ENCODE measurements at regions of chr7 and their contacts with region 1.

Region 1: GRCh38 chr7:71639382-71640085 is 507.6 kb downstream of the GALNT17 start:
- DNase-seq: no peak
- H3K4me3 ChIP-seq: no peak overlapping the region
- H3K27ac ChIP-seq: no peak overlapping the region
- H3K4me1 ChIP-seq: no peaks in the 10 kb centered on the region
- H3K27me3 ChIP-seq: no peaks in the 10 kb centered on the region
- CTCF ChIP-seq: no peak
- POLR2A ChIP-seq: no peak

Region 2: DNA sequence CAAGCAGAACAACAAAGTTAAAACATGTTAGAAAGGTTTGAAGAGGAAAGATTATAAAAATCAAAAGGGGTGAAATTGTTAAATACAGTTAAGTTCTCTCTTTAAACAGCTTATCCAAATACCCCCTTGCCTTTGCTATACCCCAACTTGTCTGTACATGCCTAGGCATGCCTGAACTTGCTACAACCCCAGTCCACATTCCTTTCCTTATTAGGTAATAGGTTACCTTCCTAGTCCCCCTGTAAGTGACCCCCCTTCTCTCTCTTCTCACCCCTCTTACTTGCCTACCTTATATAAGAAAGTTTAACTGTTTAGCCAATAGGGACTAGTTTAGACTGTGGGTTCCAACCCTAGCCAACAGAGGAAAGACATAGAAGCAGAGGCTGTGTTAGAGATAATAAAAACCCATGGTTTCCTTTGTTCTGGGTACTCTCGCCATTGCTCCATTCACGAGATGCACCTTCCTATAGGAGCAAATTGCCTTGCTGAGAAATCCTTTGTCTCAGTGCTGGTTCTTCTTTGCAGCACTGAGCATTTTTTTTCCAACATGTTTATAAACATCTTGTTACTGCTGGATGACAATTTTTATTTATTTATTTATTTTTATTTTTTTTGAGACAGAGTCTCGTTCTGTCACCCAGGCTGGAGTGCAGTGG is 789.8 kb before region 1 on chr7:
- intact Hi-C with region 1: no loop called
- DNase-seq: no peak
- H3K4me3 ChIP-seq: no peak overlapping the region
- H3K27ac ChIP-seq: no peak overlapping the region
- H3K4me1 ChIP-seq: no peaks in the 10 kb centered on the region
- H3K27me3 ChIP-seq: no peaks in the 10 kb centered on the region
- CTCF ChIP-seq: no peak
- POLR2A ChIP-seq: no peak

Region 3: GRCh38 chr7:71695186-71695585 is 55.7 kb after region 1 on chr7:
- intact Hi-C with region 1: loop called (anchors 2 kb)
- DNase-seq: no peak
- H3K4me3 ChIP-seq: no peak overlapping the region
- H3K27ac ChIP-seq: no peak overlapping the region
- H3K4me1 ChIP-seq: no peaks in the 10 kb centered on the region
- H3K27me3 ChIP-seq: no peaks in the 10 kb centered on the region
- CTCF ChIP-seq: no peak
- POLR2A ChIP-seq: no peak